ENCODE measurements at regions of chr9 and their contacts with region 1.

Region 1: GRCh38 chr9:36258208-36258988 is at the start of gene GNE:
- DNase-seq: peak; percentile 97
- H3K4me3 ChIP-seq: peak within 1 kb of the TSS; percentile 63 to 92
- H3K27ac ChIP-seq: peak within 1 kb of the TSS; percentile 97 to 98
- H3K4me1 ChIP-seq: no peaks in the 10 kb centered on the region
- H3K27me3 ChIP-seq: no peaks in the 10 kb centered on the region
- CTCF ChIP-seq: peak in 2 of 4 experiments; percentile 2 to 14
- POLR2A ChIP-seq: peak; percentile 90
- total RNA-seq, gene GNE: 34.5 to 54.0 TPM

Region 2: GRCh38 chr9:36328798-36329411 is 70.5 kb after region 1 on chr9:
- intact Hi-C with region 1: loop called (anchors 5 kb)
- DNase-seq: peak; percentile 78
- H3K4me3 ChIP-seq: no peak overlapping the region
- H3K27ac ChIP-seq: no peak overlapping the region
- H3K4me1 ChIP-seq: no peaks in the 10 kb centered on the region
- H3K27me3 ChIP-seq: no peaks in the 10 kb centered on the region
- CTCF ChIP-seq: peak; percentile 78 to 95 (median 92)
- POLR2A ChIP-seq: no peak

Region 3: DNA sequence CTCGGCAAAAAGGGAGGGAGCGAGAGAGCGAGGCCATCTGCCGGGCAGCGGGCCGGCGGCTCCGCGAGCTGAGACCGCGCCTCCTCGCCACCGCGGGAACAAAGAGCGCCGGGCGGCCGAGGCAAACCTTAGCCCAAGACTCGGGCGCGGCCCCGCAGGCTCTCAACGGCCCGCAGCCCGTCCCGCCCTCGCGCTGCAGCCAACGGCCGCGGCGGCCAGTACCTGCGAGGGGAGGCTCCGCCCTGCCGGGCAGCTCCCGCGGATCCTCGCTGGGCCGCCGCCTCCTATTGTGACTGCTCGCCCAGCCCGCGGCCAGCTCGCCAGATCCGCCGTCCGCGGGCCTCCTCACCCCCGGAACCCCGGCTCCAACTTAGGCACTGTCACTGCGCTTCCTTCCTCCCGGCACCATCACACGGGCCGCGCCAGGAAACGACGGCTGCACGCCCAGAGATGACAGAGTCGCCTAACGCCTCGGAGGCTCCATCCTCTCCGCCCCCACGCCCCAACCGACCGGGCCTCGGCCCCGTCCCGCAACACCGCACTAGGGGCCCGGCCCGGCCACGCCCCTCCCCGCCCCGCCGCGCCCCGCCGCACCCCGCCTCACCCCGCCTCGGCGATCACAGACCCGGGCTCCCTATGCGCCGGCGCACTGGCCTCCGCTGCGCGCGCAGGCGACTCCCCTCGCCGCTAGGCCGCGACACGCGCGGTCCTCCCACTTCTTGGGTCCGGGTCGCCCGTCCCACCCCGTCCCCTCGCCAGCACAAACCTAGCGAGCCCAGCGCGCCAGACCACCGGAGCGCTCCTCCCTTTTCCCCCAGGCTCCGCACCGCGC is 142.2 kb after region 1 on chr9:
- intact Hi-C with region 1: loop called (anchors 5 kb)
- DNase-seq: peak; percentile 87
- H3K4me3 ChIP-seq: peak overlapping the region; percentile 79 to 82
- H3K27ac ChIP-seq: peak overlapping the region; percentile 97 to 98
- H3K4me1 ChIP-seq: peaks cover 4% of the 10 kb centered on the region
- H3K27me3 ChIP-seq: no peaks in the 10 kb centered on the region
- CTCF ChIP-seq: peak in 2 of 4 experiments; percentile 25 to 44
- POLR2A ChIP-seq: peak; percentile 52

Measured in prostate gland (tissue), 2 donors.